ENCODE measurements at regions of chr22 and their contacts with region 1.

Region 1: GRCh38 chr22:36123673-36124630 is 36.6 kb downstream of the APOL3 start:
- DNase-seq: peak; percentile 97
- ATAC-seq: peak; percentile 98

Region 2: DNA sequence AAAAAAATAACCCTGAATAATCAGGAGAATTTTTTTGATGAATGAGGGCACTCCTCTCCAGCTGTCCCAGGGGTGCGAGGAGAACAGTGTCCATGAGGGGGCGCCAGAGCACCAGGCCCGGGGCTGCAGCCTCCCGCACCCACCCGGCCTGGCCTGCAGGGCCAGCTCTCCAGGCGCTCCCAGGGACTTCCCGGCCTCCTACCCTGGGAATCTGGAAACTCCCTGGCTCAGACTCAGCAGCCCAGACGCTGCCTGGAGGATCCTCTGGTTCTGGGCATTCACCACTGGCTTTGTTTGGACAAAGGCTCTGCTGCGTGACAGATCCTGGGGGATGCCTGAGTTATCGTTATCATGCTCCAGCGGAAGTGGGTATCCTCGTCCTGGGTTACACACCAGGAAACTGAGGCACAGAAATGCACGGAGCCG is 693.0 kb before region 1 on chr22:
- intact Hi-C with region 1: loop called in 1 of 2 experiments (anchors 10 kb)
- DNase-seq: peak; percentile 91
- ATAC-seq: peak; percentile 97 to 98

Region 3: GRCh38 chr22:35627264-35628041 is 496.5 kb before region 1 on chr22:
- intact Hi-C with region 1: loop called in 1 of 2 experiments (anchors 5 kb)
- DNase-seq: peak; percentile 87
- ATAC-seq: peak; percentile 72 to 79

Region 4: GRCh38 chr22:35749808-35750207 is 374.1 kb before region 1 on chr22:
- intact Hi-C with region 1: loop called in 1 of 2 experiments (anchors 10 kb)
- DNase-seq: no peak
- ATAC-seq: no peak

Region 5: GRCh38 chr22:35930933-35931332 is 193.0 kb before region 1 on chr22:
- intact Hi-C with region 1: loop called (anchors 2 to 5 kb)
- DNase-seq: no peak
- ATAC-seq: peak; percentile 88 to 99

Region 6: GRCh38 chr22:36065775-36066559 is 58.0 kb before region 1 on chr22:
- intact Hi-C with region 1: loop called (anchors 2 to 5 kb)
- DNase-seq: peak; percentile 95
- ATAC-seq: peak; percentile 93 to 94

Measured in left cardiac atrium (tissue), 4 donors.